ENCODE measurements at regions of chr4 and their contacts with region 1.

Region 1: DNA sequence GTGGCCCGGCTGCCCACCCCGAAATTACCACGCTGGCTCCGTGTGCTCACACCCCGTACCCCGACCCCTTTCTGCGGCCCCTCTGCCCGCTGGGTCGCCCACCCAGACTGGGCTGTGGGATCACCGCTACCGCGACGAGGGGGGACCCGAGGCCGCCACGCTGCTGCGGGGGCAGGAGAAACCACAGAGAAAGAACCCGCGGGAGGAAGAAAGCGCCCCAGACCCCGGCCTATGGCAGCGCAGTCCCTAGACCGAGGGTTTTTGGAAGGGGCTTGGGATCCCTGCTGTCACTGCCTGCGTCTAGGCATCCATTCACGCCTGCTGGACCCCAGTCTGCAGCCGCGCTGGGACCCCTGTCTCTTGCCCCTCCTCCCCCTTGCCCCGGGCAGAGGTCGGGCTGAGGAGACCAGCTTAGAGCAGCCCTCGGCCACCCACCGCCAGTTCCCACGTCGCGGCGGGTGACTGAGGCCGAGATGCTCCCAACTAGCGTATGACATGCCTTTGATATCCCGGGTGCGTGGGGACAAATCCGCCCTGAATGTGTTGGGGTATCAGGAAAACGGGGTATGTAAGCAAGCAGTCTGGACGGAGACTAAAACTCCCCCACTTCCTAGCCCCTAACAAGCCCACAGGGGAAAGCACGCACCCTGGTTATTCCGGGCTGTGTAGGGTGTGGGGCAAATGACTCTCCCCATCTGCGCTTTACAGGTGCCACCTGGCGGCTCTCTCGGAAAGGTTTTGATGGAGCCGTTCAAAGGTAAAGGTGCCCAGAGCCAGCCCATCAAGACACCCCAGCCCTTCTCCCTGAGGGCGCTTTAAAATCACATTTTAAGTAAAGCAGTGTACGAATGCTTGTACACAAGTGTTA is 862 bp upstream of the INPP4B start:
- DNase-seq: peak; percentile 90
- ATAC-seq: peak; percentile 75
- H3K4me3 ChIP-seq: peak overlapping the region; percentile 92
- H3K27ac ChIP-seq: peak overlapping the region; percentile 17
- H3K4me1 ChIP-seq: peaks cover 34% of the 10 kb centered on the region
- H3K27me3 ChIP-seq: no peaks in the 10 kb centered on the region
- CTCF ChIP-seq: peak; percentile 87

Region 2: DNA sequence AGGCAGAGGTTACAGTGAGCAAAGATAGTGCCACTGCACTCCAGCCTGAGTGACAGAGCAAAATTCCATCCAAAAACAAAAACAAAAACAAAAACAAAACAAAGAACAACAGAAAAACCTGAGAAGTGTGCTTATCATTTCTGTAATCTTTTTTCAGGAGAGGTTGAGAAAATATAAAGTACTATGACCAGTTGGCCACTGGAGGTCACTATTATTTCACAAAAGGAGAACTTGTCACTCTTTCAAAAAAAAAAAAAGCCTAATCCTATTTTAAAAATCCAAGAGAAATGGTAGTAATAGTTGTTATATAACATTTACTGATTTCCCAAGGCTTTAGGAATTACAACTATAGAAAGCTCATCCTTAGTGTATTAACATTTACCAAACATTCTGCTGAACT is 1688.7 kb before region 1 on chr4:
- CTCF ChIA-PET with region 1: no interaction called
- POLR2A ChIA-PET with region 1: no interaction called
- intact Hi-C with region 1: loop called (anchors 1 kb)
- DNase-seq: peak; percentile 51
- ATAC-seq: no peak
- H3K4me3 ChIP-seq: no peak overlapping the region
- H3K27ac ChIP-seq: no peak overlapping the region
- H3K4me1 ChIP-seq: no peaks in the 10 kb centered on the region
- H3K27me3 ChIP-seq: no peaks in the 10 kb centered on the region
- CTCF ChIP-seq: peak; percentile 77

Region 3: DNA sequence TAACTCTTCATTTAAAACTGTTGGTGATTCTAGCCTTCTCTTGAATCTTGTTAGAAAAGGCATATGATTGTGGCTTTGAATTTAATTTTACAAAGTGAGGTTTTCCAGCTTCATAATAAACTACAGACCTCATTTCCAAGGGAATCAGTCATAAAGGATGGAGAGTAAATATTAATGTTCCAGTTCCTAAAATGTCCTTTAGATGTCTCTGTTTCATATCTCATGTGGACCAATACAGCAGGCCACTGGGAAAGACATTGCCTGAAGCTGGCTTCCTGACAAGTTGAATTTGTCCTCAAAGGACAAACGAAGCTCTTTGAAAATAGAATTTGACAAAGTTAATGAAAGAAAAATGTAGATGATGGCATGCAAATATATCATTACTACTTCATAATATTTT is 1500.8 kb before region 1 on chr4:
- CTCF ChIA-PET with region 1: no interaction called
- POLR2A ChIA-PET with region 1: no interaction called
- intact Hi-C with region 1: loop called (anchors 2 kb)
- DNase-seq: peak; percentile 81
- ATAC-seq: peak; percentile 59
- H3K4me3 ChIP-seq: no peak overlapping the region
- H3K27ac ChIP-seq: no peak overlapping the region
- H3K4me1 ChIP-seq: peaks cover 16% of the 10 kb centered on the region
- H3K27me3 ChIP-seq: no peaks in the 10 kb centered on the region
- CTCF ChIP-seq: peak; percentile 84

Region 4: DNA sequence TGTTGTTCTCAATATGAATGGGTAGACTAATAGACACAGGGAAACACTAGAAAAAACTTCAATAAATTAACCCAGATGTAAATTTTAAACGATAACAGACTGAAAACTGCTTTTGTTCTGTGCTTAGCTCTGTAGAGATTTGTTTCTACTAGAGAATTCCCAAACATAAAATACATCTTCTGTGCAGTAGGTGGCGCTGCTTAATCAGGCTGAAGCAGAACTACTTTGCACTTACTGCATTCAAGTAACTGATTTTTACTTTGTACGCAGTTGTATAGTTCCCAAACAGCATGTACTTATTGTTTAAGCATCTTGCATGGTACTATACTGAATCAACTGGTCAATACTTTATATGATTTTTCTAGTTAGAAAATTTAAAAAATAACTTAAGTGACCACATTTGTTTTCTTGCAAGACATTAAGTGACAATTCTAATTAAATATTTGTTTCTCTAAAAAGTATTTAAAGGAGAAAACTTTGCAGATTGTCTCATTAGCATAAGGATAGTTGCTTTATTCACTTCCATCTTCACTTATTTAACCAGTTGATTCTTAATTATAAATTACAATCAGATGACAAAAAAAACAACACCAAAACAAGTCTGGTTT is 720.0 kb before region 1 on chr4:
- CTCF ChIA-PET with region 1: interaction called, 3 read pairs
- POLR2A ChIA-PET with region 1: no interaction called
- intact Hi-C with region 1: loop called (anchors 1 kb)
- DNase-seq: peak; percentile 87
- ATAC-seq: peak; percentile 68
- H3K4me3 ChIP-seq: no peak overlapping the region
- H3K27ac ChIP-seq: no peak overlapping the region
- H3K4me1 ChIP-seq: peaks cover 17% of the 10 kb centered on the region
- H3K27me3 ChIP-seq: no peaks in the 10 kb centered on the region
- CTCF ChIP-seq: peak; percentile 96

Region 5: DNA sequence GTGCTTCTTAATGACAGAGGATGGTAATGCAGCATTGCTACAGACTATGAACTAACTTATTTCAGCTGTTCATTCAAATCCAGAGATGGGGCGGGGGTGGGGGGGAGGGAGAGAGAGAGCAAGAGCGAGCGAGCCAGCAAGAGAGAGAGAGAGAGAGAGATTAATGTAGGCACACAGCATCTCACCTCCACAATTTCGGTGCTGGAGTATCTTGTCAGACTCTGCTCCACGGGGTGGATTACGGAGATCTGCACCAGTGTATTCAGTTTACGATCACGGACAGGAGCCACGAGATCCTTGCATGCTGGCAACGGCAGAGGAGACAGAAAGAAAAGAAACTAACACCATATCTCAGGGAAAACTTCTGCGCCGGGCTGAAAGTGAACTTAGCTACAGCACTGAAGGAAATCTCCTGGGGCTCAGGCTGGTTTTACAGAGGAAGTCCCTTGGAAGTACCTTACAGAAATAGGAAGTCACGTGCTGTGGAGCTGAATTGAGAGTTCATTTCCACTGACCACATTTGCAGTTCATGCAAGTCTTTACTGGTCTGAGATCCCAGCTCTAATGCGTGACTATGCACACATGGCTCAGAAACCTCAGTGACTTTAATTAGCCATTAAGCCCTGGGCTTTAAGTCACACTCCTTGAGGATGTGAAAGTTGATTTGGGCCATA is 441.8 kb before region 1 on chr4:
- CTCF ChIA-PET with region 1: no interaction called
- POLR2A ChIA-PET with region 1: no interaction called
- intact Hi-C with region 1: loop called (anchors 2 kb)
- DNase-seq: peak; percentile 69
- ATAC-seq: peak; percentile 16
- H3K4me3 ChIP-seq: peak overlapping the region; percentile 64
- H3K27ac ChIP-seq: peak overlapping the region; percentile 97
- H3K4me1 ChIP-seq: peaks cover 56% of the 10 kb centered on the region
- H3K27me3 ChIP-seq: no peaks in the 10 kb centered on the region
- CTCF ChIP-seq: no peak

Region 6: GRCh38 chr4:143085224-143085623 is 238.3 kb after region 1 on chr4:
- CTCF ChIA-PET with region 1: no interaction called
- POLR2A ChIA-PET with region 1: no interaction called
- intact Hi-C with region 1: loop called (anchors 10 kb)
- DNase-seq: peak; percentile 54
- ATAC-seq: no peak
- H3K4me3 ChIP-seq: no peak overlapping the region
- H3K27ac ChIP-seq: no peak overlapping the region
- H3K4me1 ChIP-seq: no peaks in the 10 kb centered on the region
- H3K27me3 ChIP-seq: peaks cover 34% of the 10 kb centered on the region
- CTCF ChIP-seq: peak; percentile 63